BJ (cell line): ENCODE measurements at regions of chr12 and their contacts with region 1.

Region 1: GRCh38 chr12:32312049-32312670 is 87.2 kb upstream of the FGD4 start:
- DNase-seq: peak; percentile 30
- H3K4me3 ChIP-seq: no peak overlapping the region
- H3K27me3 ChIP-seq: no peaks in the 10 kb centered on the region
- CTCF ChIP-seq: peak; percentile 54

Region 2: DNA sequence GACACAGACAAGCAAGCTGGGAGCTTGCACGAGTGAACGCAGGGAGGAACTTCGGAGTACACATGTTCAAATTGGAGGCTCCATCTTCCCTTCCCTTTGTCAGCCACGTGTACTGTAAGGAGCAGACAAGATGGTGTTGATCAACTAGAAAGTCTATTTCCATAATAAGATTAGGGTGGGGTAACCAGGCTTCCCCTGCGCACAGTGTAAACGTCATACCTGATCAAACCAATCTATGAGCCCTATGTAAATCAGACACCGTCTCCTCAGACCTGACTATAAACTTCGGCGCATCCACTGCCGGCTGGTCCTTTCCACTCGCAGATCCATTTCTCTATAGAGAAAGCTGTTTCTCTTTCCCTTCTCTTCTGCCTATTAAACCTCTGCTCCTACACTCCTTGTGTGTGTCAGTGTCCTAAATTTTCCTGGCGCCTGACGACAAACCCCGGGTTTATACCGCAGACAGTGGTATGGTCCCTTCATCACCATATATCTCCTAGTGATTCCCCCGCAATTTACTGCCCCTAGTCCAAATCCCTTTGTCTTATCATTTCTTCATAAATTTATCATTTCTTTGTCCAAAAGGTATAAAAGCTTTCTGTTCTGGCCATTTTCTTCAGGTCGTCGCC is 660.2 kb before region 1 on chr12:
- CTCF ChIA-PET with region 1: interaction called, 11 read pairs
- POLR2A ChIA-PET with region 1: no interaction called
- DNase-seq: no peak
- H3K4me3 ChIP-seq: no peak overlapping the region
- H3K27me3 ChIP-seq: no peaks in the 10 kb centered on the region
- CTCF ChIP-seq: no peak

Region 3: GRCh38 chr12:32296567-32296966 is 15.6 kb before region 1 on chr12:
- CTCF ChIA-PET with region 1: no interaction called
- POLR2A ChIA-PET with region 1: no interaction called
- DNase-seq: no peak
- H3K4me3 ChIP-seq: no peak overlapping the region
- H3K27me3 ChIP-seq: no peaks in the 10 kb centered on the region
- CTCF ChIP-seq: no peak

Region 4: GRCh38 chr12:32390572-32391219 is 78.5 kb after region 1 on chr12:
- CTCF ChIA-PET with region 1: no interaction called
- POLR2A ChIA-PET with region 1: no interaction called
- DNase-seq: no peak
- H3K4me3 ChIP-seq: peak overlapping the region; percentile 15
- H3K27me3 ChIP-seq: no peaks in the 10 kb centered on the region
- CTCF ChIP-seq: no peak